SK-N-SH (cell line): ENCODE measurements at regions of chr5 and their contacts with region 1.

Region 1: DNA sequence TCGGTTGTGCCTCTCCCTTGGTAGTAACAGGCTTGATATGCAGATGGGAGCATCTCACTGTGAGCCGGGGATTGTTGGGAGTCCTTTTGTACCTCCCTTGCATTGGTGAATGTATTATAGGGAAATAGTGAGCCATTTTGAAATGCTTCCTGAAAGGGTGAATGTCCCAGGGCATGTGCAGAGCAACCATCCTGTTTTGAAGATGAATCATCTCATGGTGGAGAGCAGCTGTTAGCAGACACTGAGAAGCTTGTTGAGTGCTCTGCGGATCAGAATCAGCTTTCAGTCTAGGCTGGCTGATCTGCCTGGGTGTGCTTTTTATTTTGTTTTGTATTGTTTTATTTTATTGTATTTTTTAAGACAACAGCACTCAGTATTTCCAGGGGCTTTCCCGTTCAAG is 29.7 kb downstream of the SLC36A1 start:
- DNase-seq: no peak
- H3K4me3 ChIP-seq: no peak overlapping the region
- H3K27ac ChIP-seq: no peak overlapping the region
- H3K4me1 ChIP-seq: peaks cover 13% of the 10 kb centered on the region in 2 experiments
- H3K27me3 ChIP-seq: no peaks in the 10 kb centered on the region
- CTCF ChIP-seq: no peak
- EP300 ChIP-seq: no peak
- RAD21 ChIP-seq: no peak

Region 2: DNA sequence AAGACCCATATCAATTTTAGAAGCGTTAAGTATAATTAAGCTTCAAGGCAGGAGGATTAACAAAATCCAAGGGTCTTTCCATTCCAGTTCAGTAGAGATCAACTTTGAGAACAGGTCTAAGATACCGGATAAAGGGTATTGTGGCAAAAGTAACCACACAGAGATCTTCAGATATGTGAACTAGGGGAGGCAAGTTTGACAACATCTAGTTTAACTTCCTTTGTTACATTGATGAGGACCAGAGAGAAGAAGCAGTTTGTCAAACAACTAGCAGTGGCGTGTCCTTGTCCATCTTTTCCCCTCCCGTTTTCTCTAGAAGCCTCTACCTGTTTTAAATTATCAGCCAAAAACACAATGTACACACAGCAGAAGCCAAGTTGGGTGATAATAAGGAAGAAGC is 138.4 kb before region 1 on chr5:
- CTCF ChIA-PET with region 1: no interaction called
- POLR2A ChIA-PET with region 1: no interaction called
- DNase-seq: no peak
- H3K4me3 ChIP-seq: no peak overlapping the region
- H3K27ac ChIP-seq: no peak overlapping the region
- H3K4me1 ChIP-seq: no peaks in the 10 kb centered on the region
- H3K27me3 ChIP-seq: no peaks in the 10 kb centered on the region; the same call in 1 of the 2 replicates
- CTCF ChIP-seq: no peak
- EP300 ChIP-seq: no peak
- RAD21 ChIP-seq: no peak

Region 3: GRCh38 chr5:151384106-151384505 is 93.0 kb before region 1 on chr5:
- CTCF ChIA-PET with region 1: no interaction called
- POLR2A ChIA-PET with region 1: no interaction called
- DNase-seq: no peak
- H3K4me3 ChIP-seq: no peak overlapping the region
- H3K27ac ChIP-seq: no peak overlapping the region
- H3K4me1 ChIP-seq: no peaks in the 10 kb centered on the region
- H3K27me3 ChIP-seq: no peaks in the 10 kb centered on the region
- CTCF ChIP-seq: no peak
- EP300 ChIP-seq: no peak
- RAD21 ChIP-seq: no peak

Region 4: GRCh38 chr5:151499501-151500035 is 22.5 kb after region 1 on chr5:
- CTCF ChIA-PET with region 1: interaction called, 10 read pairs
- POLR2A ChIA-PET with region 1: no interaction called
- DNase-seq: peak; percentile 27
- H3K4me3 ChIP-seq: no peak overlapping the region
- H3K27ac ChIP-seq: no peak overlapping the region
- H3K4me1 ChIP-seq: peaks cover 0 to 11% of the 10 kb centered on the region in 2 experiments; a peak in 2 of 4 replicates
- H3K27me3 ChIP-seq: no peaks in the 10 kb centered on the region
- CTCF ChIP-seq: no peak
- EP300 ChIP-seq: no peak
- RAD21 ChIP-seq: no peak